MCF 10A (cell line): ENCODE measurements at regions of chr4 and their contacts with region 1.

Region 1: GRCh38 chr4:15479089-15479912 is 9.6 kb downstream of the CC2D2A start:
- DNase-seq: peak; percentile 87
- H3K4me3 Mint-ChIP-seq: peak overlapping the region; percentile 76
- H3K27ac Mint-ChIP-seq: peak overlapping the region; percentile 59
- H3K4me1 Mint-ChIP-seq: peaks cover 13% of the 10 kb centered on the region
- H3K27me3 Mint-ChIP-seq: no peaks in the 10 kb centered on the region
- CTCF ChIP-seq: peak; percentile 63

Region 2: GRCh38 chr4:15649914-15650545 is 170.7 kb after region 1 on chr4:
- CTCF ChIA-PET with region 1: interaction called, 49 read pairs
- POLR2A ChIA-PET with region 1: interaction called, 38 read pairs
- intact Hi-C with region 1: loop called (anchors 1 kb)
- DNase-seq: peak; percentile 71
- H3K4me3 Mint-ChIP-seq: no peak overlapping the region
- H3K27ac Mint-ChIP-seq: no peak overlapping the region
- H3K4me1 Mint-ChIP-seq: peaks cover 20% of the 10 kb centered on the region
- H3K27me3 Mint-ChIP-seq: no peaks in the 10 kb centered on the region
- CTCF ChIP-seq: peak; percentile 66

Region 3: DNA sequence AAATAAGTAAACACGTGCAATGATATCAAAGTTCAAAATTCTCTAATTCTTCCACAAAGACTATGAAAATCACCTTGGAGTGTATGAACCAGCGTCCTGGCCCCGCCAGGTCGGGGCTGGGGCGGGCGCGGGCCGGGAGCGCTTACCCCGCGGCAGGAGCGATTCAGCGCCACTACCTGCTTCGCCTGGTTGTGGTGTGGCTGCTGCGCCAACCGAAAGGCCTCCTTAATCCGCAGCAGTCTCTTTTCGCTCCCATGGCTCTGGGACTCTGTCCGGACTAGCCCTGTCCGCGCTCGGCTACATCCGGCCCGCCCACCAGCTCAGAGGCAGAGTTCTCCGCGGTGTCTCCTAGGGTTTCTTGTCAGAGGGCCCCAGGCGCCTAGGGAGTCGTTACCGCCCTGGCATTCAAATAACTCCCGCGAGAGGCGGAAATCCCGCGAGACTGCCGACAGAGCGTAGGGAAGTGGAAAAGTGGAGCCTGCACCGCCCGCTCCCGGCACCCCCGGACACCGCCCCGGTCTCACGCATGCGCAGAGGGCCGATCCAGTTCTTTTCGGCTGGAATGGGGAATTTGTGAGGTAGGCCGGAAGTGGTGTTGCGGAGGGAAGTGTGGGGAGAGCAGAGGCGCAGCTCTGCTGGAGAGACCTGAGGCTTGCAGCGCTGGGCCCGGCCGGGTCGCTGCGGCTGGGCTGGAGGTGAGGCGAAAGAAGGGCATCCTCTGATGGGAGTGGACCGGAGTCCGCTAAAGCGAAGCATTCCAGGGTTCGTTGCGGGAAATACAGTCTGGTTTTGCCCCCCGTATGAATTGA is 202.1 kb after region 1 on chr4 and contains the start of gene FAM200B:
- CTCF ChIA-PET with region 1: interaction called, 6 read pairs
- POLR2A ChIA-PET with region 1: interaction called, 25 read pairs
- intact Hi-C with region 1: no loop called
- DNase-seq: peak; percentile 100
- H3K4me3 Mint-ChIP-seq: peak within 1 kb of the TSS; percentile 97
- H3K27ac Mint-ChIP-seq: peak within 1 kb of the TSS; percentile 98
- H3K4me1 Mint-ChIP-seq: peaks cover 40% of the 10 kb centered on the region
- H3K27me3 Mint-ChIP-seq: no peaks in the 10 kb centered on the region
- CTCF ChIP-seq: no peak
- total RNA-seq, gene FAM200B: 33.6 and 46.5 TPM in 2 replicates

Region 4: DNA sequence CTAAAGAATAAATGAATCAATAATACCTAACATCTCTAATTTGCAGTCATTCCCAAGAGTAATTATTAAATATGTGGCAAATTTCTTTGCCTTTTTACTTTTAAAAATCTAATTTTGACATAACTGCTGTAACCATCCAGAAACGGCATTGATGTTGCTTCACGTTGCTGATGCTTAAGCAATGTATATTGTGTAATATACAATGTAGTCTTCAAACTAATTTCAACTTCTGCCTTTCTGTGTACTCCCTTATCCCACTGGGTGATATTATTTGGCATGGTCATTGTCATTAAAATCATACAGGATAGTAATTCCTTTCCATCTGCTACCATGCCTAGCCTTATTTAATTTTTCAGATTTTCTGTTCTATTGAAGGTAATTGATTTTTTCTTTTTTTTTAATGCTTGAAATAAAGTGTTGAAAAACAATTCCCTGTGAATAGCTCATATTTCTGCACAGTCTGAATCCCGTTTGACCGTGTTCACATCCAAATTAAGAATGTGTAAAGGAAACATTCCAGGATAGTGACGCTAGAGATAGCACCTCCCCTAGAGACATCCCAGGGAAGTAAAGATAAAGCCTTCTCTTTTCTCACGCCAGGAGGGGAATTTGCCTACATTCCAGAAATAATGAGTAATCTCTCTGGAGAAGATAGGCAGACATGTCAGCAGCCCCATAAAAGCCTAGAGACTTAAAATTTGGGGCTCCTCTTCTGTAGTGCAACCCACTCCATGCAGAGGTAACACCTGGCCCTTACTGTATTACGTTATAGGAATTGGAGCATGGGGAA is 210.9 kb after region 1 on chr4:
- CTCF ChIA-PET with region 1: no interaction called
- POLR2A ChIA-PET with region 1: interaction called, 5 read pairs
- intact Hi-C with region 1: loop called (anchors 5 kb)
- DNase-seq: peak; percentile 70
- H3K4me3 Mint-ChIP-seq: no peak overlapping the region
- H3K27ac Mint-ChIP-seq: no peak overlapping the region
- H3K4me1 Mint-ChIP-seq: peaks cover 24% of the 10 kb centered on the region
- H3K27me3 Mint-ChIP-seq: no peaks in the 10 kb centered on the region
- CTCF ChIP-seq: no peak

Region 5: DNA sequence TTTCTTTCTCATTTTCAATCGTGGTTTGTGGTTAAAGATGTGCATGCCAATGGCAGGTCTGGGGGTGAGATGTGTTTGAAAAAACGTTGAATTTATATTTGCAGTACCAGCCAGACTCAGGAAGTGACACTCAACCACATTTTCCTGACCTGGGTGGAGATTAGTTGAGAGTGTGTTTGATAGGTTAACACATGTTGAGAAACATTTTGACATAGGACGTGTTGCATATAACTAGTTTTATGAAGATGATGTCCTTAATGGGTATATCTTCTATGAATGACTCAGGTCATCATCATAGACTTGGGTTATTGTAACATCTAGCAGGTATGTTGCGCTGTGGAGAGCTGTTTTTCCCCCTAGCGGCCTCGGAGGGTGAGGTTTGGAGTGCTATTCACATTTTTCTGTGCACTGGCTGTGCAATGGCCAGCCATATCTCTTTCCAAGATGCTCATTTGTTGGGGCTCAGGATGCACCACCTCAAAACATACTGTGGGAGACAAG is 277.1 kb after region 1 on chr4:
- CTCF ChIA-PET with region 1: no interaction called
- POLR2A ChIA-PET with region 1: interaction called, 3 read pairs
- intact Hi-C with region 1: loop called (anchors 2 kb)
- DNase-seq: peak; percentile 82
- H3K4me3 Mint-ChIP-seq: no peak overlapping the region
- H3K27ac Mint-ChIP-seq: no peak overlapping the region
- H3K4me1 Mint-ChIP-seq: peaks cover 5% of the 10 kb centered on the region
- H3K27me3 Mint-ChIP-seq: no peaks in the 10 kb centered on the region
- CTCF ChIP-seq: peak; percentile 50

Region 6: GRCh38 chr4:16001484-16001858 is 522.2 kb after region 1 on chr4:
- CTCF ChIA-PET with region 1: interaction called, 6 read pairs
- POLR2A ChIA-PET with region 1: no interaction called
- intact Hi-C with region 1: loop called (anchors 1 kb)
- DNase-seq: peak; percentile 75
- H3K4me3 Mint-ChIP-seq: no peak overlapping the region
- H3K27ac Mint-ChIP-seq: no peak overlapping the region
- H3K4me1 Mint-ChIP-seq: no peaks in the 10 kb centered on the region
- H3K27me3 Mint-ChIP-seq: no peaks in the 10 kb centered on the region
- CTCF ChIP-seq: peak; percentile 94